ENCODE measurements at regions of chr9 and their contacts with region 1.

Region 1: GRCh38 chr9:69248005-69248404 is 73.9 kb downstream of the TJP2 start:
- DNase-seq: no peak
- ATAC-seq: no peak
- H3K4me3 ChIP-seq: no peak overlapping the region
- H3K27ac ChIP-seq: no peak overlapping the region
- H3K4me1 ChIP-seq: no peaks in the 10 kb centered on the region
- H3K27me3 ChIP-seq: no peaks in the 10 kb centered on the region
- CTCF ChIP-seq: no peak

Region 2: DNA sequence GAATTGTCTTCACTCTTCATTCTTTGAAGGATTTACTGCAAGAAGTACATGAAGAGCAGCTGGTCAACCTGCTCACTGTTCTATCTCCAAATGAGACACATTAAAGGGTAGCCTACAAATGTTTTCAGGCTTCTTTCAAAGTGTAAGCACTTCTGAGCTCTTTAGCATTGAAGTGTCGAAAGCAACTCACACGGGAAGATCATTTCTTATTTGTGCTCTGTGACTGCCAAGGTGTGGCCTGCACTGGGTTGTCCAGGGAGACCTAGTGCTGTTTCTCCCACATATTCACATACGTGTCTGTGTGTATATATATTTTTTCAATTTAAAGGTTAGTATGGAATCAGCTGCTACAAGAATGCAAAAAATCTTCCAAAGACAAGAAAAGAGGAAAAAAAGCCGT is 174.9 kb before region 1 on chr9:
- CTCF ChIA-PET with region 1: no interaction called
- POLR2A ChIA-PET with region 1: interaction called, 10 read pairs
- in situ Hi-C with region 1: no loop called
- intact Hi-C with region 1: no loop called
- DNase-seq: no peak
- ATAC-seq: no peak
- H3K4me3 ChIP-seq: no peak overlapping the region
- H3K27ac ChIP-seq: no peak overlapping the region
- H3K4me1 ChIP-seq: no peaks in the 10 kb centered on the region
- H3K27me3 ChIP-seq: no peaks in the 10 kb centered on the region
- CTCF ChIP-seq: no peak

Region 3: DNA sequence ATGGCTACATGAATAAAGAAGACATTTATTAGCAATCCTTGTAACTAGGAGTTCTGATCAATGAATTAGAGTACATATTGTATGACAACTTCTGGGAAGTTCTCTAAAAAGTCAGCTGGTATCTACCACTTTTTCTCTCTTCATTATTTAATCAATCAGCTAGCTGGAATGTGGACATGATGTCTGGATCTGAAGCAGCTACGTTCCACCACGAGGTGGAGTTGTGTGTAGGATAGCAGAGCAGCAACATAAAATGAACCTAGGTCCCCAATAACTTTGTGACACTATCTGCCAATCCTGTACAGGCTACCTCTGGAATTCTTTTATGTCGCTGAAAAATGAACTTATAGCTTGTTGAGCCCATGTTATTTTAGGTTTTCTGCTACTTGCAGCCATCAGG is 44.1 kb after region 1 on chr9:
- CTCF ChIA-PET with region 1: no interaction called
- POLR2A ChIA-PET with region 1: no interaction called
- in situ Hi-C with region 1: no loop called
- intact Hi-C with region 1: no loop called
- DNase-seq: no peak
- ATAC-seq: no peak
- H3K4me3 ChIP-seq: no peak overlapping the region
- H3K27ac ChIP-seq: no peak overlapping the region
- H3K4me1 ChIP-seq: no peaks in the 10 kb centered on the region
- H3K27me3 ChIP-seq: no peaks in the 10 kb centered on the region
- CTCF ChIP-seq: peak; percentile 24

Region 4: GRCh38 chr9:69397384-69398214 is 149.6 kb after region 1 on chr9:
- CTCF ChIA-PET with region 1: no interaction called
- POLR2A ChIA-PET with region 1: no interaction called
- in situ Hi-C with region 1: no loop called
- intact Hi-C with region 1: no loop called
- DNase-seq: no peak
- ATAC-seq: no peak
- H3K4me3 ChIP-seq: no peak overlapping the region
- H3K27ac ChIP-seq: no peak overlapping the region
- H3K4me1 ChIP-seq: no peaks in the 10 kb centered on the region
- H3K27me3 ChIP-seq: no peaks in the 10 kb centered on the region
- CTCF ChIP-seq: no peak